A549 (cell line): ENCODE measurements at regions of chr20 and their contacts with region 1.

Region 1: DNA sequence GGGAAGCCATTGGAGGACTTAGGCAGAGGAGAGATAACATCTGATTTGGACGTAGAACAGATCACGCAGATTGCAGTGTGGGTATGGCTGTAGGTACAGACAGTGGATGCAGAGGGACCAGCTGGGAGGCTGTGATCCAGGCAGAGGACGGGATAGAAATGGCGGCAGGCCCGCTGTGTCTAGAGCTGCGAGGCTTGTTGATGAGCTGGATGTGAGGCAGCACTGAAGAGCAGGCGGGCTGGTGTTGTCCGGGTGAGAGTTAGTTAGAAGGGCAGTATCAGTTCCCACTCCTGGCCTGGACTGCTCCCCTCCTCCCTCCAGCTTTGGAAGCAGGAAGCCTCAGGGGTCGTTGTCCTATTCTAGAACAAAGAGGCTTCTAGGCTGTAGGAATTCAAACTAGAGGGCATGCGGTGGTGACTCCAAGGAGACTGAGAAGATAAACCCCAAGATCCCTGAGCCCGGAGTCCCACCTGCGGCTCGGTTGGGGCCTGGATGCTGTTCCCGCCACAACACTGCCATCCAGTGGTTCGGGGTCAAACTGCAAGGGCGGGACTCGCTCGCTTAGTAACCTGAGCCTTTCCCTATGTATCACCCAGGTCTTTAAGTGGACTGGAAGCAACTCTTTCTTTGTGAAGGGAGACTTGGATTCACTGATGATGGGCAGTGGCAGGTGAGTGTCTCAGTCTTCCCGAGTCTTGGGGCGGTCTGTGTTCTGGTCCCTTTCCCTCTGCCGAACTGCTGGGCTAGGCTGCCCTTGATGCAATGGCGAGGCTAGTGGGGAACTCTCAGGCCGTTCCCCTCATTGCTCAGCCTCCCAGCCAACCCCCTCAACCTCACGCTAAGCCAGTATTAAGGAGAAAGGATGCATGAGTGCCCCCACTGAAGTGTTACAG is 11.2 kb downstream of the TLDC2 start:
- DNase-seq: peak; percentile 80 to 90
- ATAC-seq: peak; percentile 93 to 97
- H3K4me3 ChIP-seq: no peak overlapping the region
- H3K27ac ChIP-seq: peak overlapping the region; percentile 24 to 64; a peak in 4 of 6 replicates
- H3K4me1 ChIP-seq: no peaks in the 10 kb centered on the region
- CTCF ChIP-seq: peak; percentile 92
- EP300 ChIP-seq: no peak
- POLR2A ChIP-seq: no peak
- RAD21 ChIP-seq: peak; percentile 93 to 96

Region 2: DNA sequence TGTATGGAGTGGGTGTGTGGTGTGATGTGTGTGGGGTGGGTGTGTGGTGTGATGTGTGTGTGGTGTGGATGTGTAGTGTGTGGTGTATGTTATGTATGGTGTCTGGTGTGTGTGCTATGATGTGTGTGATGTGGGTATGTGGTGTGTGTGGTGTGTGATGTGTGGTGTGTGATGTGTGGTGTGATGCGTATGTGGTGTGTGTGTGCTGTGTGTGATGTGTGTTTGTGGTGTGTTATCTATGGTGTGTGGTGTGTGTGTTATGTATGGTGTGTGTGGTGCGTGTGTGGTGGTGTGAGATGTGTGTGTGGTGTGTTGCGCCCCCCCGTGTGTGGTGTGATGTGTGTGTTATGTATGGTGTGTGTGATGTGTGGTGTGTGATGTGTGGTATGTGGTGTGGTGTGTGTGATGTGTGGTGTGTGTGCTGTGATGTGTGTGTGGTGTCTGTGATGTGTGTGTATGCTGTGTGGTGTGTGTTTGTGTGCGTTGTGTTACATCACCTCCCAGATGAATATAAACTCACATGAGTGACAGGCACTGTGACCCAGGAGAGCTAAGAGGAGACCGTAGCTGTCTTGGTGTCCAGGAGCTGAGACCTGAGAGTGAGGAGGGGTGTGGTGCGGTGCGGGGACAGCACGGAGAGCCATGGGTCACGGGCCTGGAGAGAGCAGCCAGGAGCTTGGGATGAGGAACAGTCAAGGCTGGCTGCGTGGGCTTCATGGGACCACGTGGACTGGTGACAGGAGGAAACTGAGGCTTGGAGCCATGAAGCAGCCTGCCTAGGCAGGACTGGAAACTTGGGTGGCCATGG is 572.2 kb before region 1 on chr20:
- CTCF ChIA-PET with region 1: no interaction called
- POLR2A ChIA-PET with region 1: no interaction called
- DNase-seq: peak in 1 of 2 experiments; percentile 48
- ATAC-seq: peak; percentile 40 to 47; a peak in 4 of 6 replicates
- H3K4me3 ChIP-seq: no peak overlapping the region
- H3K27ac ChIP-seq: no peak overlapping the region
- H3K4me1 ChIP-seq: no peaks in the 10 kb centered on the region
- CTCF ChIP-seq: no peak
- EP300 ChIP-seq: no peak
- POLR2A ChIP-seq: no peak
- RAD21 ChIP-seq: no peak

Region 3: GRCh38 chr20:36856691-36857635 is 30.1 kb before region 1 on chr20:
- CTCF ChIA-PET with region 1: interaction called, 32 read pairs
- POLR2A ChIA-PET with region 1: no interaction called
- DNase-seq: no peak
- ATAC-seq: no peak
- H3K4me3 ChIP-seq: no peak overlapping the region
- H3K27ac ChIP-seq: peak overlapping the region in 1 of 2 experiments; percentile 82; a peak in 3 of 6 replicates
- H3K4me1 ChIP-seq: peaks cover 61% of the 10 kb centered on the region
- CTCF ChIP-seq: no peak
- EP300 ChIP-seq: no peak
- POLR2A ChIP-seq: no peak
- RAD21 ChIP-seq: no peak

Region 4: DNA sequence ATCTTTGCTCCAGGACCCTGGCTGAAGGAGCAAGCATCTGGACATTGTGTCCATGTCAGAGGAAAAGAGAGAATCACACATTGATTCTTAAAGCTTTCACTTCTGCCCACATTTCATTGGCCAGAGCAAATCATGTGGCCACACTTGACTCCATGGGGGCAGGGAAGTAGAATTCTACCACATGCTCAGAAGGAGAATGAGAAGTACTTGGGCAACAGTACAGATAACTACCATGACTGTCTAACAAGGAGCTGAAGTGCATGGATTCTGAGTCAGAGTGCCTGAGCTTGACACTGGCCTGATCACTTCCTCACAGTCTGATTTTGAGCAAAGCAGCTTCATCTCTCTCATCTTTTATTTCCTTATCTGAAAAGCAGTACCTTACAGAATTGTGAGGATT is 335.9 kb after region 1 on chr20:
- CTCF ChIA-PET with region 1: no interaction called
- POLR2A ChIA-PET with region 1: no interaction called
- DNase-seq: peak in 1 of 2 experiments; percentile 29
- ATAC-seq: peak; percentile 56 to 77; a peak in 4 of 6 replicates
- H3K4me3 ChIP-seq: no peak overlapping the region
- H3K27ac ChIP-seq: no peak overlapping the region
- H3K4me1 ChIP-seq: no peaks in the 10 kb centered on the region
- CTCF ChIP-seq: no peak
- EP300 ChIP-seq: no peak
- POLR2A ChIP-seq: no peak
- RAD21 ChIP-seq: no peak